ENCODE measurements at regions of chr6 and their contacts with region 1.

Region 1: DNA sequence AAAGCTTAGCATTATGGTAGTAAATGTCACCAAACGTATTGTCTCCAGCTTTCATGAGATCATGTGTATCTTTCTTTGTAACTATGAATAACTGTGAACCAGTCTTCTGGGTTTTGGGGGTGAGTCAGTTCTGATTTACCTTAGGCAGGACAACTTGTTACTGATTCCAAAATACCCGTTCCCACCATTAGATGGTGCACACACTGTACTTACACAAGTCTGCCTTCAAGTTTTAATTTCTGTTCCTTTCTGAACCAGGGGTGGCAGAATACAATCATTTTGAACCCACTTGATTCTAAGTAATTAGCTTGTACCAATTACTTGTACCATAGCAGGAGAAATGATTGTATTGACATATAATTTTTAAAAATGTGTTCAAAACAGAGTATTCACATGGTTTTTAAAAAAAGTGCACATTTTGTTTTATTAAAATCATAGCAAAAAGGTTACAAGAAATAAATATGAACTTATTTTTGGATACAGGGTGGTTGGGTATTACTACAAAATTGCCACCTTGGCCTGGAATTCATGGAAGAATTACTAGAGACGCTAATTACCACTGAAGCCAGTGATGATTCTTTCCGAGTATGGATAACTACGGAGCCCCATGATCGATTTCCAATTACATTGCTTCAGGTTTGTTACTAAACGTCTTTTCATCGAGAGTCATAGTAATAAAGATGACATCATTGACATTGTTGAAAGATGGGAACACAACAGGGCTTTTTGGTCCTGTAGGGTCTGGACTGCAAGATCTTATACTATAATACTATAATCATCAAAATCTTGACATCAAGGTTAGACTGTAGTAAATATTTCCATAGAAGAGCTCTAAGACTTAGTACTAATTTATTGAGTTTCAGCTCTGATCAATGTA is 75.2 kb upstream of the GLP1R start:
- DNase-seq: peak; percentile 52
- ATAC-seq: peak; percentile 91
- H3K4me3 ChIP-seq: no peak overlapping the region
- H3K27ac ChIP-seq: no peak overlapping the region
- H3K4me1 ChIP-seq: no peaks in the 10 kb centered on the region
- H3K27me3 ChIP-seq: peaks cover 16% of the 10 kb centered on the region
- CTCF ChIP-seq: peak; percentile 69; the same call in 1 of the 2 replicates

Region 2: DNA sequence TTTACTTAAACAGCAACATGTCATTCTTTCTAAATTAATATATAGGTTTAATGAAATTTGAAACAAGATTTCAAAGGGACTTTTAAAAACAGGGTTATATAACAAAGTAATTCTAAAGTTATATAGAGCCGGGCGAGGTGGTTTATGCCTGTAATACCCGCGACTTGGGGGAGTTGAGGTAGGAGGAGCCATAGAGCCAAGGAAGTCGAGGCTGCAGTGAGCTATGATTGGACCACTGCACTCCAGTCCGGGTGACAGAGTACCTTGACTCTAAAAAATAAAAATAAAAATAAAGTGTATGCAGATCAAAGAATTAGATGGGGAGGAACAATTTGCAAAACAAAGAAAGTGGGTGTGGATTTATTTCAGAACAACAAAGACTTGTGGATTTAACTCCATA is 75.9 kb before region 1 on chr6:
- CTCF ChIA-PET with region 1: no interaction called
- POLR2A ChIA-PET with region 1: no interaction called
- in situ Hi-C with region 1: no loop called
- intact Hi-C with region 1: no loop called
- DNase-seq: no peak
- ATAC-seq: no peak
- H3K4me3 ChIP-seq: no peak overlapping the region
- H3K27ac ChIP-seq: no peak overlapping the region
- H3K4me1 ChIP-seq: no peaks in the 10 kb centered on the region
- H3K27me3 ChIP-seq: peaks cover 20% of the 10 kb centered on the region
- CTCF ChIP-seq: no peak

Region 3: GRCh38 chr6:38915205-38915925 is 58.1 kb before region 1 on chr6:
- CTCF ChIA-PET with region 1: no interaction called
- POLR2A ChIA-PET with region 1: no interaction called
- in situ Hi-C with region 1: no loop called
- intact Hi-C with region 1: no loop called
- DNase-seq: no peak
- ATAC-seq: no peak
- H3K4me3 ChIP-seq: no peak overlapping the region
- H3K27ac ChIP-seq: no peak overlapping the region
- H3K4me1 ChIP-seq: no peaks in the 10 kb centered on the region
- H3K27me3 ChIP-seq: peaks cover 10% of the 10 kb centered on the region
- CTCF ChIP-seq: no peak

Region 4: DNA sequence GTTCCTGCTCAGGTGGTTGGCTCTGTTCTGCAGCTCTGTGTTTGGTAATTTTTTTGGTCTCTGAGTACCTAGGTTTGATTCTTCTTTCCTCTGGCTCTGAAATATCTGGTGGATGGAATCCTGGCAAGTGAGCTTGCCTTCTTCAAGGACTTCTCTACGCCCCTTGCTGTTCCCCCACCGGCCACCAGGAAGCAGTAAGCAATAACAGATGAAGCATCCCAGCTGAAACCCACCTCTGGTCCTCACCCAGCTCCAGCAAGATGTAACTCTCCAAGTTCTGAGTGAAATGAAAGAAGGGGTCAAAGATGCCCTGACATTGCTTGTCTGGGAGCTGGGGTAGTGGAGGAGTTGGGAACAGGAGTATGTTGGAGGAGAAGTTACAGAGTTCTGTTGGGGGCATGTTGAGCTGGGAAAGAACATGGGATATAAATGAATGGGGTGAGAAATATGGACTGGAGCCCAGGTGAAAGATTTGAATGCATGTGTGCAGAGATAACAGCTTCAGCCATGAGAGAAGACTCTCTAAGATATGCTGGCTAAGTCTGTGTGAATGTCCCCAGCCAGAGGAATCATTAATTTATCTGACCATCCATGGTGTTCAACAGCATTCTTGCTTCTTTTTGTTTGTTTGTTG is 23.8 kb after region 1 on chr6:
- CTCF ChIA-PET with region 1: no interaction called
- POLR2A ChIA-PET with region 1: no interaction called
- in situ Hi-C with region 1: no loop called
- intact Hi-C with region 1: no loop called
- DNase-seq: no peak
- ATAC-seq: no peak
- H3K4me3 ChIP-seq: no peak overlapping the region
- H3K27ac ChIP-seq: no peak overlapping the region
- H3K4me1 ChIP-seq: no peaks in the 10 kb centered on the region
- H3K27me3 ChIP-seq: peaks cover 6% of the 10 kb centered on the region
- CTCF ChIP-seq: peak; percentile 72

Region 5: GRCh38 chr6:39102071-39102820 is 128.8 kb after region 1 on chr6:
- CTCF ChIA-PET with region 1: interaction called, 6 read pairs
- POLR2A ChIA-PET with region 1: no interaction called
- in situ Hi-C with region 1: no loop called
- intact Hi-C with region 1: loop called (anchors 10 kb)
- DNase-seq: no peak
- ATAC-seq: peak; percentile 87
- H3K4me3 ChIP-seq: no peak overlapping the region
- H3K27ac ChIP-seq: no peak overlapping the region
- H3K4me1 ChIP-seq: no peaks in the 10 kb centered on the region
- H3K27me3 ChIP-seq: no peaks in the 10 kb centered on the region; the same call in 1 of the 2 replicates
- CTCF ChIP-seq: peak; percentile 72

Region 6: GRCh38 chr6:39153766-39154397 is 180.5 kb after region 1 on chr6:
- CTCF ChIA-PET with region 1: no interaction called
- POLR2A ChIA-PET with region 1: no interaction called
- in situ Hi-C with region 1: no loop called
- intact Hi-C with region 1: loop called (anchors 10 kb)
- DNase-seq: no peak
- ATAC-seq: no peak
- H3K4me3 ChIP-seq: no peak overlapping the region
- H3K27ac ChIP-seq: no peak overlapping the region
- H3K4me1 ChIP-seq: no peaks in the 10 kb centered on the region
- H3K27me3 ChIP-seq: peaks cover 21% of the 10 kb centered on the region
- CTCF ChIP-seq: no peak

Region 7: GRCh38 chr6:39309942-39310531 is 336.6 kb after region 1 on chr6:
- CTCF ChIA-PET with region 1: no interaction called
- POLR2A ChIA-PET with region 1: no interaction called
- in situ Hi-C with region 1: no loop called
- intact Hi-C with region 1: loop called (anchors 5 kb)
- DNase-seq: peak; percentile 64
- ATAC-seq: peak; percentile 92
- H3K4me3 ChIP-seq: no peak overlapping the region
- H3K27ac ChIP-seq: no peak overlapping the region
- H3K4me1 ChIP-seq: no peaks in the 10 kb centered on the region
- H3K27me3 ChIP-seq: no peaks in the 10 kb centered on the region; the same call in 1 of the 2 replicates
- CTCF ChIP-seq: peak; percentile 91